ENCODE measurements at regions of chr11 and their contacts with region 1.

Region 1: DNA sequence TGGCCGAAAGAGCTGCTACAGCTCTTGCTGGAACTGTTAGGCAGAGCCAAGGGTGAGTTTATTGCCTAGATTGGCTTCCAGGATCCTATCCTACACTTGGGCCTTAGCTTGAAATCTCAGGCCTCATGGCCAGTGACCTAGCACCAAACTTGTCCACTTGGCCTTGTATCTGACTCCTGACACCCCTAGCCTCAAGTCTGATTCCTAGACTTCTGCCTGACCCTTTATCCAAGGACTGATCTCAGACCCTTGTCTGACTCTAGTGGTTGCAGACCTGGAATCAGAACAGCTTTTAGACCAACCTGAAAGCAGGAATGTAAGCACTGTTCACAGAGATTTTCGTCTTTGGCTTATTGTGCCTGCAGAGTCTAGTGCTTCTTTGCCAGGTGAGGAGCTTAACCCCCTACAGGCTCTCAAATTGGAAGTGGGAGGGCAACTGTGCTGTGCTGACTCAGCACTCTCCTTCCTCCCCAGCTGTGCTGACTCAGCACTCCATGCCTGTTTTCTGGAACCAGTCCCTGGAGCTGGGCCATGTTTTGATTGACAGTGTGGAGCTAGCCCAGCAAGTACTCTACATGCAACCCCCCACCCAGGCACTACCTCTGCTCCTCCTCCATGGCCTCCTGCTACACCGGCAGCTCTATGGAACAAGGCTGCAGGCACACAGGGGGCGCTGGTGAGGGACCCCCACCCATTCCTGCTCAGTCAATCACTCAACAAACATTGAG is 35.1 kb downstream of the RRP8 start:
- DNase-seq: no peak
- ATAC-seq: 0 out of 2 replicates have a peak, but pooled peaks have one; percentile 25
- H3K4me3 ChIP-seq: no peak overlapping the region
- H3K27ac ChIP-seq: no peak overlapping the region
- H3K4me1 ChIP-seq: no peaks in the 10 kb centered on the region
- H3K27me3 ChIP-seq: no peaks in the 10 kb centered on the region
- CTCF ChIP-seq: no peak

Region 2: GRCh38 chr11:6452219-6452618 is 116.1 kb before region 1 on chr11:
- CTCF ChIA-PET with region 1: no interaction called
- POLR2A ChIA-PET with region 1: no interaction called
- in situ Hi-C with region 1: no loop called
- intact Hi-C with region 1: no loop called
- DNase-seq: no peak
- ATAC-seq: no peak
- H3K4me3 ChIP-seq: no peak overlapping the region
- H3K27ac ChIP-seq: no peak overlapping the region
- H3K4me1 ChIP-seq: no peaks in the 10 kb centered on the region
- H3K27me3 ChIP-seq: no peaks in the 10 kb centered on the region
- CTCF ChIP-seq: no peak

Region 3: DNA sequence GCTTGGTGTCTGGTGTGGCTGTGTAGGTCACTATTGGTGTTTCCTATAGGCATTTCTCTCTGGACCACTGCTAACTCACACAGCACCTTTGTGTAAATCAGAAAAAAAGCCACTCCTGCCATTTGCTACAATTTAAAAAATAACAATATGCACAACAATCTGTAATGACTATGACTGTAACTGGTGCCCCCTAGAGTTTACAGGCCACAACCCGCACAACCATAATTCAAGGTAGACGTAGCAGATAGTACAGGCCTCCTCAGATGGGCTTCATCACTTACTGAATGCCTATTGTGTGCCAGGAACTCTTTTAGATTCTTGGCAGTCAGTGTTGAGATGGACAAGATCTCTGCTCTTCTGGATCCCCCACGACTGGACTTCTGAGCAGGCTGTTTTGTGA is 731.0 kb after region 1 on chr11:
- CTCF ChIA-PET with region 1: no interaction called
- POLR2A ChIA-PET with region 1: no interaction called
- in situ Hi-C with region 1: no loop called
- intact Hi-C with region 1: loop called (anchors 10 kb)
- DNase-seq: no peak
- ATAC-seq: no peak
- H3K4me3 ChIP-seq: no peak overlapping the region
- H3K27ac ChIP-seq: no peak overlapping the region
- H3K4me1 ChIP-seq: no peaks in the 10 kb centered on the region
- H3K27me3 ChIP-seq: no peaks in the 10 kb centered on the region
- CTCF ChIP-seq: peak; percentile 42; the same call in 1 of the 2 replicates